ENCODE measurements at regions of chr15 and their contacts with region 1.

Region 1: DNA sequence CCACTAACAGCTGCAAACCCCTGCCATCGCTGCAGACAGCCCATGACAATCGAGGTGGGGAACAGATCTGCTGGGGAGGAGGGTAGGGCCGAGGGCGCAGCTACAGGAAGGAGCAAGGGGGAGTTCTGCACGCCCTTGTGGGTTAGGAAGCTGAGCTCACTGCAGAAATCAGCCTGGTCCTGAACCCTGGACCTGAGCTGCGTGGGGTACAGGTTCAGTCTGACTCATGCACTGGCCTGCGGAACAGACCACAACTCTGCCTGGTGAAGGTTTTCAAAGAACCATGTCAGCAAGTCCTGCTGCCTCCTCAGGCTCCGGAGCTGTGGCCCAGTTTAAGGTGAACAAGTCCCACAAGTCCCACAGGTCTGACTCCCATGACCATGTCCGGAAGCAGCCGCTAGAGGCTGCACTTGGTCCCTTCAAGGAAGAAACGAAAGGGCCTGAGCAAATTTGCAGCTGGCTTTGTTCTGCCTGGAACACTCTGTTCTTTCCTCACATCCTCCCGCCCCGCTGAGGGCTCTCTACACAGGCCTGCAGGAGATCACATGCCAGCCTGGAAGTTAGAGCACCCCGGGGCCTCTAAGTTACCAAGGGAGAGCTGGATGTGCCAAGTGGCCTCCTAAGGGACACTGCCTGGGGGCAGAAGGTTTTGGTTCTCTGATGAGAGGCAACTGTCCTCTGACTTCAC is 49.4 kb upstream of the AKAP13 start:
- DNase-seq: peak; percentile 90
- ATAC-seq: peak; percentile 84
- H3K4me3 Mint-ChIP-seq: peak overlapping the region; percentile 81
- H3K27ac Mint-ChIP-seq: peak overlapping the region; percentile 92
- H3K4me1 Mint-ChIP-seq: peaks cover 46% of the 10 kb centered on the region
- H3K27me3 Mint-ChIP-seq: no peaks in the 10 kb centered on the region

Region 2: DNA sequence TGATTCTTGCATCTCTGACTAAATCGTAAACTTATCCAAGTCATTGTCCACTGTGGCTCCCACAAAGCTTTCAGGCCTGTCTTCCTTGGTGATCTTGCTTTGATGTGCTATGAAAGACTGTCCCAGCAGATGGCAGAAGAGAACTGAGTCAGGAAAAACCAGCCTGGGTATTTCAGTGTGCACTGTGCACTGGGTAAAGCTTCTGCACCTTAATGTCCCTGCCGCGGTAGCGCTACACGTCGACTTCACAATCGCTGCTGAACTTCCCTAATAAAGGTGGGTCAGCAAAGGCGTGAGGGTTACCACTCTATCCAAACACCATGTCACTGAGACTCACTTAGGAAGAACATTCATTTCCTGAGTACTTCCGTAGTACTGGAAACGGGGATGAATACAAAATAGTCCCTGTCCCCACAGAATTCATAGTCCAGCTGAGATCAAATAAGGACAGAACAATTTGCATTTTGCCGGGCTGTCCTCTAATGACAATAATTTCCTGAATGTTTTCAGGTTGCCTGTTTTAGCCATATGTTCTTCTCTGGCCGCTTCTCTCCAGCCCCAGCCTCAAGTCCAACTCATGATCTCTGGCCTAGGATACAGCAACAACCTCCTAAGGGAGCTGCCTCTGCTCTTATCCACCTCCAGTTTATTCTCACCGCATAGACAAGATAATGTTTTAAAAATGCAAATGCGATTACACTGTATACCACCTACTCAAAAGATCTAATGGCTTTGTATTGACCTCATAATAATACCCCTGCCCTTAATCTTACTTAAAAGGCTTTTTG is 34.2 kb before region 1 on chr15:
- CTCF ChIA-PET with region 1: interaction called, 39 read pairs
- POLR2A ChIA-PET with region 1: interaction called, 8 read pairs
- DNase-seq: peak; percentile 85
- ATAC-seq: peak; percentile 97
- H3K4me3 Mint-ChIP-seq: peak overlapping the region; percentile 27
- H3K27ac Mint-ChIP-seq: peak overlapping the region; percentile 15
- H3K4me1 Mint-ChIP-seq: peaks cover 17% of the 10 kb centered on the region
- H3K27me3 Mint-ChIP-seq: peaks cover 7% of the 10 kb centered on the region

Region 3: GRCh38 chr15:85312486-85312885 is 18.6 kb before region 1 on chr15:
- CTCF ChIA-PET with region 1: interaction called, 147 read pairs
- POLR2A ChIA-PET with region 1: interaction called, 45 read pairs
- DNase-seq: no peak
- ATAC-seq: no peak
- H3K4me3 Mint-ChIP-seq: no peak overlapping the region
- H3K27ac Mint-ChIP-seq: peak overlapping the region; percentile 14
- H3K4me1 Mint-ChIP-seq: peaks cover 44% of the 10 kb centered on the region
- H3K27me3 Mint-ChIP-seq: no peaks in the 10 kb centered on the region

Region 4: DNA sequence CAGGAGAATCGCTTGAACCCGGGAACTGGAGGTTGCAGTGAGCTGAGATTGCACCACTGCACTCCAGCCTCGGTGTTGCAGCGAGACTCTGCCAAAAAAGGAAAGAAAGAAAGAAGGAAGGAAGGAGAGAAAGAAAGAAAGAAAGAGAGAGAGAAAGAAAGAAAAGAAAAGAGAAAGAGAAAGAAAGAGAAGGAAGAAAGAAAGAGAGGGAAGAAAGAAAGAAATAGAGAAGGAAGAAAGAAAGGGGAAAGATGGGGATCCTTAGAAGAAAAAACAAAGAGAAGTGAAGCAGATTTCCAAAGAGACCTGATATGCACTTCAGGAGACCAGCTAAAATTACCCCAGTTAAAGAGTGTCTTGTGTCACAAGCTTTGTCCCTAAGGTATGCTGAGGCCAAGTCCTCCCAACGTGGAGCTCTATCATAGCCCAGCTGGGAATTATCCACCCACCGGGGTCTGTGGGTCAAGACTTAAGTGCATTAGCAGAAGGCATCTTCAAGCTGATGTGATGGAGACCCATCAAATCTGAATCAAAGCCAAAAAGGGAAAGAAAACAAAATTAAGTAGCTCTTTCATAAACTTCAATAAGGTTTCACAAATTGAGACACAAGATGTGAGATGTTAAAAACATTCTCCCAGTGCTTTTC is 31.5 kb after region 1 on chr15:
- CTCF ChIA-PET with region 1: interaction called, 11 read pairs
- POLR2A ChIA-PET with region 1: no interaction called
- DNase-seq: no peak
- ATAC-seq: no peak
- H3K4me3 Mint-ChIP-seq: no peak overlapping the region
- H3K27ac Mint-ChIP-seq: no peak overlapping the region
- H3K4me1 Mint-ChIP-seq: peaks cover 9% of the 10 kb centered on the region
- H3K27me3 Mint-ChIP-seq: peaks cover 17% of the 10 kb centered on the region

Region 5: GRCh38 chr15:85402195-85402881 is 71.3 kb after region 1 on chr15:
- CTCF ChIA-PET with region 1: interaction called, 37 read pairs
- POLR2A ChIA-PET with region 1: no interaction called
- DNase-seq: no peak
- ATAC-seq: no peak
- H3K4me3 Mint-ChIP-seq: no peak overlapping the region
- H3K27ac Mint-ChIP-seq: no peak overlapping the region
- H3K4me1 Mint-ChIP-seq: peaks cover 50% of the 10 kb centered on the region
- H3K27me3 Mint-ChIP-seq: no peaks in the 10 kb centered on the region

Measured in activated CD8-positive, alpha-beta T cell treated with anti-CD3 and anti-CD28 coated beads, Interleukin-2, amount 10 ng/mL, durations not matched to agents 7 days and 5 days (primary cell).